Spleen (tissue), 13 donors: ENCODE measurements at regions of chr20 and their contacts with region 1.

Region 1: DNA sequence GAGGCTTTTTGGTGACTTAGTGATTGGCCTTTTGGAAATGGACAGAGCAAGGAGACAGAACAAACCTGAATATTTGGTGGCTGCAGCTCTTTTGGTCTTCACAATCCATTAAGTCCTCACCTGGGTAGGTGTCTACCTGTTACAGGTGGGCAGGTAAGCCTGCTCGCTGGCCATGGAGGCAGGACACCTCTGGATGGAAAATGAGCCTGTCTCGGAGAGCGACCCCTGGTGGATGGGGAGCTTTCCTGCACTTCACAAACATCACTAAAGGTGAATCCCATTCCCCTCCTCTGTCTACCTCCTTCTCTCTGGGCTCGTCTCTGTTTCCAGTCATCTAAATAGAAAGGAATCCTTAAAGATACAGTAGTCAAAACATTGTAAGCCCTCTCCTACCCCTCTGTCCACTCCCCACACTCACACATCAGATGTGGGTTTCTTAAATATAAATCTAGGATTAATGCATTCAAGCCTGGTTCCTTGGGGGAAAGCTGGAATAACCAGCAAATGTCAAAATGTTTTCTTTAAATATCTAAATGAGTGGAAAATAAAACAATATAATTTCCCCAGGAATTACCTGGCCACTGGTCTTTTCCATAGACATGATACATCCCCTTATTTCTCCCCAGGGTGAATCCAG is 304.9 kb downstream of the CDH26 start:
- DNase-seq: peak; percentile 85
- H3K4me3 ChIP-seq: no peak overlapping the region
- H3K27ac ChIP-seq: no peak overlapping the region
- H3K4me1 ChIP-seq: peaks cover 0 to 29% (median 12%) of the 10 kb centered on the region in 6 donors
- H3K27me3 ChIP-seq: peaks cover 0 to 4% (median 0%) of the 10 kb centered on the region in 7 donors
- CTCF ChIP-seq: peak; percentile 23 to 84 (median 70)
- POLR2A ChIP-seq: no peak

Region 2: DNA sequence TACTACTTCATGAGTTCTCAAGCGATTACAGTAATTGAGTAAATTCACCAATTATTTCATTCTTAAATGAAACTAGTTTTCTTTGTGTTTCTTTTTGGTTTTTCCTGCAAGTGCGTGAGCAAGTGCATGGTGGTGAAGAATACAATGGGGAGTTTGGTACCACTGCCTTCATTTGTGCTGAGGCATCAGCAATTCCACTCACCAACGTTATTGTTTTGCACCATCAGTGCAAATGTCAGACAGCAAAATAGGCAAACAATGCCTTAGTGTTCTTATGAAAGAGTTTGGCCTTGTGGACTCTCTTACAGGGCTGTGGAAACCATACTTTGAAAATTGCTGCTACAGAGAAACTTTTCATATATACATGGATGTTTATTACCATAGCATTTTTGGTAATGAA is 296.7 kb before region 1 on chr20:
- intact Hi-C with region 1: loop called (anchors 10 kb)
- DNase-seq: no peak
- H3K4me3 ChIP-seq: no peak overlapping the region
- H3K27ac ChIP-seq: no peak overlapping the region
- H3K4me1 ChIP-seq: no peaks in the 10 kb centered on the region
- H3K27me3 ChIP-seq: no peaks in the 10 kb centered on the region
- CTCF ChIP-seq: no peak
- POLR2A ChIP-seq: no peak